HepG2 (cell line): ENCODE measurements at regions of chr15 and their contacts with region 1.

Region 1: GRCh38 chr15:89647191-89647851 is 7.9 kb downstream of the KIF7 start:
- DNase-seq: peak; percentile 57
- ATAC-seq: peak; percentile 95
- H3K4me3 ChIP-seq: peak overlapping the region in 1 of 3 experiments; percentile 32; a peak in 1 of 6 replicates
- H3K27ac ChIP-seq: no peak overlapping the region
- H3K4me1 ChIP-seq: peaks cover 6% of the 10 kb centered on the region; the same call in 1 of the 2 replicates
- H3K27me3 ChIP-seq: no peaks in the 10 kb centered on the region
- CTCF ChIP-seq: peak; percentile 94
- EP300 ChIP-seq: no peak
- POLR2A ChIP-seq: no peak
- RAD21 ChIP-seq: peak; percentile 84

Region 2: GRCh38 chr15:89673165-89673512 is 25.8 kb after region 1 on chr15:
- CTCF ChIA-PET with region 1: interaction called, 28 read pairs
- POLR2A ChIA-PET with region 1: no interaction called
- in situ Hi-C with region 1: no loop called
- intact Hi-C with region 1: loop called (anchors 1 kb)
- DNase-seq: peak; percentile 25
- ATAC-seq: peak; percentile 66
- H3K4me3 ChIP-seq: no peak overlapping the region
- H3K27ac ChIP-seq: no peak overlapping the region
- H3K4me1 ChIP-seq: peaks cover 29% of the 10 kb centered on the region
- H3K27me3 ChIP-seq: no peaks in the 10 kb centered on the region
- CTCF ChIP-seq: peak; percentile 60
- EP300 ChIP-seq: no peak
- POLR2A ChIP-seq: no peak
- RAD21 ChIP-seq: 0 out of 2 replicates have a peak, but pooled peaks have one; percentile 28

Region 3: DNA sequence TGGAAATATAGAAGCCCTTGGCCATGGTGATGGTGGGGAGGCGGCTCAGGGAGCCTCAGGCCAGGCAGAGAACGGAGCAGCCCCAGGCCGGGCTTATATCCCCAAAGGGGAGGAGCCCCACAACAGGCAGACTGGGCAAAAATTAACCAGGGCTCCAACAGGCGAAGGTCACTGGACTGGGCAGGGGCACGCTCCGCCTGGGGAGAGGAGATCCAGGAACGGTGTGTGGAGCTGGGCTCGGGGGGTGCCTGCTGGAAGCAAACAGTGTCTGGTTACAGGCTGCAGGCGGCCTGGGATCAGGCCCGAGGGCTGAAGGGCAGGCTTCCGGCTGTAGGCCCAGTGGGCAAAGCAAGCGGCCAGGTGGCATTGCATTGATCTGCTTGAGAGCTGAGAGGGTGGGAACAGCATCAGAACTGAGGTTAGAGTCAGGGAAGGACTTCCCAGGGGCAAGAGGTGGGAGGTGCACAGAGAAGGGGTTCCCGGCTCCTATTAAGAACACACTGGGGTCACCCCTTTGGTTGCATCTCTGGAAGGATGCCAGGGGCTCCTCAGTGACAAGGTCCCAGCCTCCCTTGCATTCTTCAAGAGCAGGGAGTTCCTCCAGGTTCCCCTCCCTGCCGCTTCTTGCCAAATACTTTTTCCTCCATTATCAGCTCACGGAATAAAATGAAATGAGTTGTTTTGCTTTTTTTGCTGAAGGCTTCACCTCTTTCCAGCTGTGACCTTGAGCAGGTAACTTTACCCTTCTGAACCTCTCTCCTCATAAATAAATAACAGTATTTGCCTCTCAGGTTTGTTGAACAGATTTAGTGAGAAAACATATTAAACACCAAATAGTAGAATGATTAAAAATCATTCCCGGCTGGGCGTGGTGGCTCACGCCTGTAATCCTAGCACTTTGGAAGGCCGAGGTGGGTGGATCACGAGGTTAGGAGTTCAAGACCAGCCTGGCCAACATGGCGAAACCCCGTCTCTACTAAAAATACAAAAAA is 159.5 kb after region 1 on chr15:
- CTCF ChIA-PET with region 1: no interaction called
- POLR2A ChIA-PET with region 1: no interaction called
- in situ Hi-C with region 1: no loop called
- intact Hi-C with region 1: no loop called
- DNase-seq: peak; percentile 92
- ATAC-seq: peak; percentile 94
- H3K4me3 ChIP-seq: peak overlapping the region in 1 of 3 experiments; percentile 52; a peak in 2 of 6 replicates
- H3K27ac ChIP-seq: peak overlapping the region; percentile 86
- H3K4me1 ChIP-seq: peaks cover 78% of the 10 kb centered on the region
- H3K27me3 ChIP-seq: no peaks in the 10 kb centered on the region
- CTCF ChIP-seq: peak; percentile 37
- EP300 ChIP-seq: peak in 1 of 2 experiments; percentile 61; a peak in 1 of 4 replicates
- POLR2A ChIP-seq: peak in 1 of 2 experiments; percentile 62; a peak in 2 of 4 replicates
- RAD21 ChIP-seq: peak; percentile 53; the same call in 1 of the 2 replicates